ENCODE measurements at regions of chr7 and their contacts with region 1.

Region 1: GRCh38 chr7:149239345-149240191 is at the start of gene ZNF212:
- DNase-seq: peak; percentile 78 to 93 (median 86)
- ATAC-seq: peak; percentile 100
- H3K4me3 ChIP-seq: peak within 1 kb of the TSS; percentile 84
- H3K4me3 Mint-ChIP-seq: peak within 1 kb of the TSS; percentile 93
- H3K27ac ChIP-seq: peak within 1 kb of the TSS in 1 of 2 donors; percentile 72
- H3K27ac Mint-ChIP-seq: peak within 1 kb of the TSS; percentile 81
- H3K4me1 ChIP-seq: peaks cover 30% of the 10 kb centered on the region
- H3K4me1 Mint-ChIP-seq: peaks cover 27% of the 10 kb centered on the region
- H3K27me3 ChIP-seq: no peaks in the 10 kb centered on the region
- H3K27me3 Mint-ChIP-seq: peaks cover 10% of the 10 kb centered on the region
- CTCF ChIP-seq: peak; percentile 86
- total RNA-seq, gene ZNF212: 12.1 to 13.2 TPM

Region 2: GRCh38 chr7:149028346-149029109 is 211.0 kb before region 1 on chr7 and contains the start of gene PDIA4:
- CTCF ChIA-PET with region 1: no interaction called
- POLR2A ChIA-PET with region 1: no interaction called
- intact Hi-C with region 1: loop called in 1 of 2 experiments (anchors 10 kb)
- DNase-seq: peak; percentile 96 to 100 (median 99)
- ATAC-seq: peak; percentile 88
- H3K4me3 ChIP-seq: peak within 1 kb of the TSS; percentile 87
- H3K4me3 Mint-ChIP-seq: peak within 1 kb of the TSS; percentile 90
- H3K27ac ChIP-seq: peak within 1 kb of the TSS; percentile 70 to 71
- H3K27ac Mint-ChIP-seq: peak within 1 kb of the TSS; percentile 91
- H3K4me1 ChIP-seq: peaks cover 40% of the 10 kb centered on the region
- H3K4me1 Mint-ChIP-seq: peaks cover 54% of the 10 kb centered on the region
- H3K27me3 ChIP-seq: no peaks in the 10 kb centered on the region
- H3K27me3 Mint-ChIP-seq: no peaks in the 10 kb centered on the region
- CTCF ChIP-seq: no peak
- total RNA-seq, gene PDIA4: 19.5 to 19.9 TPM

Region 3: DNA sequence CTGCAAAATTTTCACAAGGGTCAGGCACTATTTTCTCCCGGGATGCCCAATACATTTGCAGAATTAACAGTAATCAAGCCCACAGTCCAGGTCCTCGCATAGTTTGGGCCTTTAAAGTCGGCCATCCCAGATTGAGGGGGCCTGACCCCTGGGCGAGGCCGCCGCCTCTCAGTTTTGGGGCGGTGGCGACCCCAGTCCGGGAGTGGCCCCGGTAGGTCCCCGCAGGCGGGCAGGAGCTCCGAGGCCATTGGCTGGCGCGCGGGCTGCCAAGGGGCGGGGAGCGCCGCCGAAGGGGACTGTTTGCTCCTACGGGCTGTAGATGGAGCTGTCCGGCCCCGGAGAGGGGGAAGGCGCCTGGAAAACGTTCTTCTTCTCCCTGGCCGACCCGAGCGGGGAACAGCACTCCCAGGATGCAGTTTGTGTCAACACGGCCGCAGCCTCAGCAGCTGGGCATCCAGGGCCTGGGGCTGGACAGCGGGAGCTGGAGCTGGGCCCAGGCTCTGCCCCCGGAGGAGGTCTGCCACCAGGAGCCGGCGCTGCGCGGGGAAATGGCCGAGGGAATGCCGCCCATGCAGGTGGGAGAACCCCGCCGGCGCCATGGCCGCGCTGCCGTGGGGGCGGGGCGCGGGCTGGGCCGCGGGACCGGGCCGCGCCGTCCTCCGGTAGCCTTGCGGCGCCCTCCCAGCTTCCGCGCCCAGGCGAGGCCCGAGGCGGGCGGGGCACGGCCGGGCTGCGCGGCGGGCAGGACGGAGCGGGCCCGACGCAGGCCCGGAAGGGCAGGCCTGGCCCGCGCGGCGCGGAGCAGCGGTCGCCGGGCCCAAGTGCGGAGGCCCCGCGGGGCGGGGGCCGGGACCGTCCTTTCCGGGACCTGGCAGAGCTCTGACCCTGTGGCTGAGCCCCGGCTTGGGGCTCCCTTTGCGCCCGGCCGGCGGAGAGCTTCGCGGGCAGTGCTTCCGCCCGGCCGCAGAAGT is 44.1 kb before region 1 on chr7 and contains the start of gene ZNF282:
- CTCF ChIA-PET with region 1: no interaction called
- POLR2A ChIA-PET with region 1: no interaction called
- intact Hi-C with region 1: loop called in 1 of 2 experiments (anchors 5 kb)
- DNase-seq: peak; percentile 32 to 83 (median 59)
- ATAC-seq: peak; percentile 79
- H3K4me3 ChIP-seq: peak within 1 kb of the TSS; percentile 90
- H3K4me3 Mint-ChIP-seq: peak within 1 kb of the TSS; percentile 96
- H3K27ac ChIP-seq: peak within 1 kb of the TSS; percentile 16 to 47
- H3K27ac Mint-ChIP-seq: peak within 1 kb of the TSS; percentile 89
- H3K4me1 ChIP-seq: peaks cover 25% of the 10 kb centered on the region
- H3K4me1 Mint-ChIP-seq: peaks cover 36% of the 10 kb centered on the region
- H3K27me3 ChIP-seq: no peaks in the 10 kb centered on the region
- H3K27me3 Mint-ChIP-seq: no peaks in the 10 kb centered on the region
- CTCF ChIP-seq: peak; percentile 54
- total RNA-seq, gene ZNF282: 13.3 to 15.6 TPM

Region 4: DNA sequence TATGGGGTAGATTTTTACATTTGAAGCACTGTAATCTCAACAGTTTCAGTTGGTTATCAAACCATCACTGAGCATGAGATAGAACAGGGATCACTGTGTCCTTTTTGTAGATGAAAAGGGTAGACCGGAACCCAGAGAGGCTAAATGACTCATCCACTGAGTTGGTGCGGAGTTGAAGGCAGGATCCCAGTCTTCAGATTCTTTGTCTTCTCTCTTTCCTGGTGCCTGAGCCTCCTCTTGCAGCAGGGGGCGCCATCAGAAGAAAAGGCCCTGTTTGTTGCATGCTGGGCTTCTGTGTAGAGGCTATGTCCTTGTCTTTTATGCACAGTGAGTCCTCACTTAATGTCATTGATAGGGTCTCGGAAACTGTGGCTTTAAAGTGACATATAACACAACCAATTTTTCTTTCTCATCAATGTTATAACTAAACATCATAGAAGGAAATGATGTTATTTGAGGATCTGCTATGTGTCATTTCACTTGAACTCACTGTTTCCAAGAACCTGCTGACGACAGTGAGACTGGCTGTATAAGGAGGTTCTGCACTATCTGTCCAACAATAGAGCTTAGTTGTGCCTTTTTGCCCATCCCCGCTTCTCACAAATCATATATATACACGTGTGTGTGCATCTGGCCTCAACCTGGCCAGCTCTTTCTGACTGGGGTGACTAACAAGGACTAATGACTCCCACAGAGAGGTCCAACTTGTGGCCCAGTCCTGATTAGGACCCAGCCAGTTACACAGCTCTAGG is 29.9 kb before region 1 on chr7:
- CTCF ChIA-PET with region 1: no interaction called
- POLR2A ChIA-PET with region 1: no interaction called
- intact Hi-C with region 1: no loop called
- DNase-seq: peak; percentile 48 to 75 (median 60)
- ATAC-seq: peak; percentile 90
- H3K4me3 ChIP-seq: no peak overlapping the region
- H3K4me3 Mint-ChIP-seq: no peak overlapping the region
- H3K27ac ChIP-seq: no peak overlapping the region
- H3K27ac Mint-ChIP-seq: peak overlapping the region; percentile 54
- H3K4me1 ChIP-seq: peaks cover 7% of the 10 kb centered on the region
- H3K4me1 Mint-ChIP-seq: peaks cover 9% of the 10 kb centered on the region
- H3K27me3 ChIP-seq: no peaks in the 10 kb centered on the region
- H3K27me3 Mint-ChIP-seq: no peaks in the 10 kb centered on the region
- CTCF ChIP-seq: peak; percentile 51

Region 5: GRCh38 chr7:149284850-149285626 is 45.5 kb after region 1 on chr7:
- CTCF ChIA-PET with region 1: no interaction called
- POLR2A ChIA-PET with region 1: interaction called, 5 read pairs
- intact Hi-C with region 1: loop called (anchors 1 to 2 kb)
- DNase-seq: peak; percentile 96 to 99 (median 98)
- ATAC-seq: peak; percentile 93
- H3K4me3 ChIP-seq: peak overlapping the region; percentile 65
- H3K4me3 Mint-ChIP-seq: peak overlapping the region; percentile 92
- H3K27ac ChIP-seq: peak overlapping the region; percentile 21 to 63
- H3K27ac Mint-ChIP-seq: peak overlapping the region; percentile 90
- H3K4me1 ChIP-seq: peaks cover 47% of the 10 kb centered on the region
- H3K4me1 Mint-ChIP-seq: peaks cover 44% of the 10 kb centered on the region
- H3K27me3 ChIP-seq: no peaks in the 10 kb centered on the region
- H3K27me3 Mint-ChIP-seq: no peaks in the 10 kb centered on the region
- CTCF ChIP-seq: peak; percentile 13

Region 6: DNA sequence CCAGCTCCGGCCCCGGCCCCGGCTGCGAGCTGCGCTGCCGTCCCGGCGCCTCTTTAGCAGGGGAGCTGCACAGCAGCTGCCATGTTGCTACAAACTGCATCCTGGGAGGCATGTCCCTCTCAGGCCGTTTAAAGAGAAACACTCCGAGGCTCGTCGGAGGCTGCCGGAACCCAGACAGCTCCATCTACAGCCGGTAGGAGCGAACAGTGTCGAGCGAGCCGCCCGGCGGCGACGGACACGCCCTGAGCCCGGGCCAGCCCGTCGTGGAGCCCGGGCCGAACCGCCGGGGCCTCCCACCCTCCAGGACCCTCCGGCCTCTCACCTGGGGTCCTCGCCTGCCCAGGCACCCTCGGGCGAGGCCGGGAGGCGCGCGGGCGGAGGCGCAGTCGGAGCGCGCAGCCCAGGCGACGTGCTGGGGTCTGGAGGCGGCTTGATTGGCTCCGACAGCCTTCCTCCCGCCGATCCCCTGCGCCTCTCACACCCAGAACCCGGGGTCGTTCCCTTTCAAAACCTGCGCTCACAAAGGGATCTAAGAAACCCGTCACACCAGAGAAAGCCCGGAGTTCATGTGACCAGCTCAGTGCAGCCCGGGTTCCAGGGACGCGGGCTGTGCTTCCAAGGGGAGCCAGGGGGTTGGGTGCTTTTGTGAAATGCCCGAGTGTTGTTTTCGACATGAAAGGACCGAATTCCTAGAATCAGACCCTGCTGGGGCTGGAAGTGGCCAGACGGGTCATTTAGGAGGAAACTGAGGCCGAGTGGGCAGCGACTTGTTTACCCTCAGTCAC is 221.1 kb after region 1 on chr7 and contains the start of gene ZNF777:
- CTCF ChIA-PET with region 1: no interaction called
- POLR2A ChIA-PET with region 1: no interaction called
- intact Hi-C with region 1: loop called in 1 of 2 experiments (anchors 1 kb)
- DNase-seq: peak; percentile 70 to 92 (median 78)
- ATAC-seq: peak; percentile 99
- H3K4me3 ChIP-seq: peak within 1 kb of the TSS; percentile 74
- H3K4me3 Mint-ChIP-seq: peak within 1 kb of the TSS; percentile 92
- H3K27ac ChIP-seq: peak within 1 kb of the TSS in 1 of 2 donors; percentile 52
- H3K27ac Mint-ChIP-seq: peak within 1 kb of the TSS; percentile 70
- H3K4me1 ChIP-seq: peaks cover 25% of the 10 kb centered on the region
- H3K4me1 Mint-ChIP-seq: peaks cover 33% of the 10 kb centered on the region
- H3K27me3 ChIP-seq: peaks cover 0 to 5% of the 10 kb centered on the region in 2 experiments
- H3K27me3 Mint-ChIP-seq: peaks cover 15% of the 10 kb centered on the region
- CTCF ChIP-seq: peak; percentile 49
- total RNA-seq, gene ZNF777: 14.5 to 14.8 TPM

Measured in CD4-positive, alpha-beta T cell (primary cell).